Caco-2 (cell line): ENCODE measurements at regions of chr2 and their contacts with region 1.

Region 1: DNA sequence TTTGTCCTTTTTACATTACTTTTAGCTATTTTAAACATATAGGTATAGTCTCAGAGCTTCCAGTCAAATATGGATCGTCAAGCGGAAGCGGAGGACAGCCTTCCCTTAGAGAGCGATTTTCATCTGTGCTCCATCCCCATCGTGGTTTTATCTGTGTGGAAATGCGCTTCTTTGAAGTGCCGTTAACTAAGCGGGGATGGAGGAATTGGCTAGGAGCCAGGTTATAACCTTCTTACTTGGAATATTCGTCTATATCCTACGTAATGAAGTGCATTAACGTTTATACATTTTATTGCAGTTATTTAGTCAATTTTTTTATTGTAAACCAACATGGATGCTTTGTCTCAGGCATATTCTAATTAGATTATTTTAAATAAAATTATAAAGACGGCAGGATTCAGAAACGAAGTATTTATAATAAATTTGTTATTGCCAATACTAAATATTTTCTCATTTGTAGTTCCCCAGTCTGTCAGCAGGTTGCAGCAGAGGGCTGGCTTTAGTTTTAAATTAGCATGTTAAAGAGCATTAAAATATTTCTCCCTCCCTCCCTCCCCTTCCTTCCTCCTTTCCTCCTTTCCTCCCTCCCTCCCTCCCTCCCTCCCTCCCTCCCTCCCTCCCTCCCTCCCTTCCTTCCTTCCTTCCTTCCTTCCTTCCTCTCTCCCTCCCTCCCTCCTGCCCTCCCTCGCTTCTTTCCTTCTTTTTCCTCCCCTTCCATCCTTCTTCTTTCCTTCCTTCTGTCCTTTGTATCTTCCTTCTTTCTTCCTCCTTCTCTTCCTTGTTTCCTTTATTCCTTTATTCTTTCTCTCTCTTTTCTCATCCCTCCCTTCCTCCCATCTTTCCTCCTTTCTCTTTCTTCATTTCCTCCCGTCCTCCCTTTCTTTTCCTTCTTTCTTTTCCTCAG is 80.6 kb upstream of the DOCK10 start:
- DNase-seq: peak in 1 of 2 experiments; percentile 3
- H3K4me3 ChIP-seq: no peak overlapping the region
- H3K4me3 Mint-ChIP-seq: no peak overlapping the region
- H3K27ac Mint-ChIP-seq: no peak overlapping the region
- H3K4me1 ChIP-seq: no peaks in the 10 kb centered on the region
- H3K4me1 Mint-ChIP-seq: no peaks in the 10 kb centered on the region
- H3K27me3 ChIP-seq: no peaks in the 10 kb centered on the region
- H3K27me3 Mint-ChIP-seq: peaks cover 3% of the 10 kb centered on the region
- CTCF ChIP-seq: peak; percentile 19 to 47

Region 2: GRCh38 chr2:225494100-225494459 is 371.2 kb after region 1 on chr2:
- CTCF ChIA-PET with region 1: no interaction called
- POLR2A ChIA-PET with region 1: no interaction called
- intact Hi-C with region 1: loop called (anchors 2 kb)
- DNase-seq: no peak
- H3K4me3 ChIP-seq: no peak overlapping the region
- H3K4me3 Mint-ChIP-seq: no peak overlapping the region
- H3K27ac Mint-ChIP-seq: no peak overlapping the region
- H3K4me1 ChIP-seq: no peaks in the 10 kb centered on the region
- H3K4me1 Mint-ChIP-seq: no peaks in the 10 kb centered on the region
- H3K27me3 ChIP-seq: no peaks in the 10 kb centered on the region
- H3K27me3 Mint-ChIP-seq: peaks cover 2% of the 10 kb centered on the region
- CTCF ChIP-seq: no peak

Region 3: DNA sequence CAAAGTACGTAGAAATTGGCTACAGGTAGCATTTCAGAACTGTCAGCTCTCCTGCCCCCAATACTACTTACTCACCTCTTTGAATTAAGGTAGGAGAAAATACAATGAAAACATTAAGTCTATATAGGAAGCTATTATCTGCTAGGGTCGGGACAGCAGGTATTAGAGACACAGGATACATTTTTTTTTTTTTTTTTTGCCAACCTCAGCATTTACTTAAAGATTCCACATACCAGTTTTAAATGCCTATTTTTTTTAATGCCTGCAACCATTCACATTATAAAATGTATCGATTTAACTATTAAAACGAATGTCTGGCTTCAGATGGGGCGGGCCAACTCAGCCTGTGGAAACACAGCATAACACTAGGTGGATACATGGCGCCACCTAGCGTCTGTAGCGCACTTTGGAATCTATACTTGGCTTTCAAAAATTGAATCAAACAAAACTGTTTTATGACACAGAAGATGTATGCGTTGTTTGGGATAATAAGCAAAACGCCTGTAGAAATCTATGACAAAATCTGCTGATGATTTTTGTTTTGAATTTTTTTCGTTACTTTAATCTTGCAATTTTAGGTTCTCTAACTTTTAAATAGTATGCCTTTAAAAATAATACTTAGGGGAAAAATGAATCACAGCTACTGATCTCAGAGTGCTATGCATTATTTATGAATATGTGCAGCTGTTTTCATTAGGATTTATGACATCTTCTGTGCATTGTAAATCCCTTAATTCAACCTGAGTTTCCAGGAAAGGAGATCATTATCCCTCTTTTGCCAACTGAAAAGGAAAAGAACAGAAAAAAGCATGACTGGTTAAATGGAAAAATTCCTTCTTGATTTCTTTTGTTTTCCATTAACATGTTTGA is 537.7 kb after region 1 on chr2:
- CTCF ChIA-PET with region 1: no interaction called
- POLR2A ChIA-PET with region 1: no interaction called
- intact Hi-C with region 1: loop called (anchors 1 kb)
- DNase-seq: peak; percentile 40 to 56
- H3K4me3 ChIP-seq: no peak overlapping the region
- H3K4me3 Mint-ChIP-seq: no peak overlapping the region
- H3K27ac Mint-ChIP-seq: no peak overlapping the region
- H3K4me1 ChIP-seq: no peaks in the 10 kb centered on the region
- H3K4me1 Mint-ChIP-seq: no peaks in the 10 kb centered on the region
- H3K27me3 ChIP-seq: no peaks in the 10 kb centered on the region
- H3K27me3 Mint-ChIP-seq: peaks cover 6% of the 10 kb centered on the region
- CTCF ChIP-seq: peak; percentile 71 to 72